ENCODE measurements at regions of chrX and their contacts with region 1.

Region 1: DNA sequence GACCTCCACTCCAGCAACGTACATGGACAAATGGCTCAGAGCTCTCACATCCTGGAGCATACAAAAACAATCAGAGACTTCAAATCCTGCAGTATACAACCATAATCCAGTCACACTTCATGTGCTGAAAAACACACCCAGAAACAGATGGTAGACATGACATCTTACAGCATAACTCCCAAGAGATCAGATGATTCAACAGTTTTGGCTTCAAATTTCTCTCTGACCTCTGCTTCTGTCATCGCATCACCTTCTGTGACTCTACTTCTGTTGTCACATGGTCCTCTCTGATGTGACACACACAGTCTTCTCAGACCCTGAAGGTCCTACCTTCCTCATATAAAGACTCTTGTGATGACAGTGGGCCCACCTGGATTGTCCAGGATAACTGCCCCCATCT is 18.5 kb downstream of the SUV39H1 start:
- DNase-seq: peak in 1 of 2 donors; percentile 34
- ATAC-seq: peak in 1 of 3 donors; percentile 7
- H3K4me3 ChIP-seq: no peak overlapping the region
- H3K4me3 Mint-ChIP-seq: no peak overlapping the region
- H3K27ac ChIP-seq: peak overlapping the region; percentile 94
- H3K27ac Mint-ChIP-seq: peak overlapping the region; percentile 76 to 97
- H3K4me1 ChIP-seq: peaks cover 57% of the 10 kb centered on the region
- H3K4me1 Mint-ChIP-seq: peaks cover 64 to 84% of the 10 kb centered on the region in 2 donors
- H3K27me3 ChIP-seq: no peaks in the 10 kb centered on the region
- H3K27me3 Mint-ChIP-seq: peaks cover 0 to 11% of the 10 kb centered on the region in 2 donors
- CTCF ChIP-seq: no peak

Region 2: GRCh38 chrX:48737213-48737938 is 22.3 kb after region 1 on chrX:
- intact Hi-C with region 1: loop called (anchors 2 kb)
- DNase-seq: peak; percentile 72 to 96
- ATAC-seq: peak; percentile 95 to 99 (median 98)
- H3K4me3 ChIP-seq: peak overlapping the region; percentile 56
- H3K4me3 Mint-ChIP-seq: peak overlapping the region; percentile 82
- H3K27ac ChIP-seq: peak overlapping the region; percentile 86
- H3K27ac Mint-ChIP-seq: peak overlapping the region; percentile 90 to 96
- H3K4me1 ChIP-seq: peaks cover 18% of the 10 kb centered on the region
- H3K4me1 Mint-ChIP-seq: peaks cover 6 to 20% of the 10 kb centered on the region in 2 donors
- H3K27me3 ChIP-seq: no peaks in the 10 kb centered on the region
- H3K27me3 Mint-ChIP-seq: no peaks in the 10 kb centered on the region
- CTCF ChIP-seq: no peak

Region 3: DNA sequence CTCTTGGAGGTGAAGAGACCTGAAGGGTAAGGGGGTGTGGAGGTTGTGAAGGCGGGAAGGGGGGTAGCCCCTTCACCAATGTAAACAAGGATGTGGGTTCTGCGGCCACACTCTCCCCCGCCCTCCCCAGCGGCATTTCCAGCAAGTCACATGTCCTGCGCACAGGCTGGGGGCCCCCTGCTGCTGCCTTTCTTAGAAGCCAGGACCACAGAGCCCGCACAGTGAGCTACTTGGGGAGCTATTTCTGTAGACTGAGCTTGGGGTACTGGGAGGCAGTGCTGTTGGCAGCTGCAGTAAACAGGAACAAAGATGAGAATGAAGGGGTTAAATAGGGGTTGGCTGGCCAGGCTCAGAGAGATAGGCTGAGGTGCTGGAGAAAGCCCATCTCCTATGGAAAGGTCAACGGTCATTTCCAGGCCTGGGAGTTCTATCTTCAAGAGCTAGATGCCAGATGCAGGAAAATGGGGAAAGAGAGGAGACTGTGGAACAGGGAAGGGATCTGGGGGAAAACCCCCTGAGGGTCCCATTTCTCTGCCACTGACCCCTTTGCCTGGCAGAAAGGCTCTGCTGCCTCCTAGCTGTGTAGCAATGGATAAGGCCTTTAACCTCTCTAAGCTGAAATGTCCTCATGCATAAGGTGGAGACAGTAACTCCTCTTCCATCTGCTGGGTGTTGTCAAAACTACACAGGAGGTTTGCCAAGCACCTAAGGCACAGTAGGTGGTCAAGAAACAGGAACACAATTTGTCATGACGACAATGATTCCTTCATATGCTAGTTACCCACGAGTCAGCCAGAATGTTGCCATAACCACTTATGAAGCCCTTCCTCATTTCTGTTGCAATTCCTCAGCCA is 222.2 kb after region 1 on chrX:
- intact Hi-C with region 1: loop called (anchors 10 kb)
- DNase-seq: peak; percentile 78 to 92
- ATAC-seq: peak; percentile 72 to 89 (median 86)
- H3K4me3 ChIP-seq: peak overlapping the region; percentile 19
- H3K4me3 Mint-ChIP-seq: peak overlapping the region; percentile 82
- H3K27ac ChIP-seq: peak overlapping the region; percentile 99
- H3K27ac Mint-ChIP-seq: peak overlapping the region; percentile 95 to 97
- H3K4me1 ChIP-seq: peaks cover 85% of the 10 kb centered on the region
- H3K4me1 Mint-ChIP-seq: peaks cover 60 to 79% of the 10 kb centered on the region in 2 donors
- H3K27me3 ChIP-seq: no peaks in the 10 kb centered on the region
- H3K27me3 Mint-ChIP-seq: peaks cover 0 to 6% of the 10 kb centered on the region in 2 donors
- CTCF ChIP-seq: peak; percentile 33

Measured in natural killer cell (primary cell).